ENCODE measurements at regions of chr17 and their contacts with region 1.

Region 1: DNA sequence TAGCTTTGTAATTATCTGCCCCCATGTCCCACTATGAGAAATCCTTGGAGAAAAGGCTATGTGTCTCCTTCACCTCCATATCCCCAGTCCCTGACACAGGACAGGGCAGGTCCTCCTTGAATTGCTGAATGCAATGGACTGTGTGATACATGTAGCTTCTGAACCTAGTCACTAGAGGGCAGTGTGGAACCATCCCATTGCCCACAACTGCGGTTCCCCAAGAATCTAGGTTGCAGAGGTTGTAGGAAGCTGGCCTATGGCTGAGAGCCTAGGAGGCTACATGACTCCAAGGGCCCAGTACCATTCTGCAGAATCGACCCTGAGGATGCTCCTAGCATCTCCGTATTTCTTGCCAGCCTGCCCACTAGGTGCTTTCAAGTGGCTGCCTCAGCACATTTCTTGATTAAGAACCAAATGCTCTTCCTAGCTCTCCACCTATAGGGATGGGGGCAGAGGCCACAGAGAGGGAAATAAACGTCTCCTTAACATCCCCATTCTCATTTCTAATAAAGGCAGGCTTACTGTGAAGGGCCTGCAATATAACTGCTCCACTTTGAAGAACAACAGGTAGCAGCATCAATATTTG is 394.0 kb downstream of the CA10 start:
- DNase-seq: peak; percentile 55
- ATAC-seq: peak; percentile 99
- H3K4me3 ChIP-seq: no peak overlapping the region
- H3K27ac ChIP-seq: no peak overlapping the region
- H3K4me1 ChIP-seq: no peaks in the 10 kb centered on the region
- H3K27me3 ChIP-seq: no peaks in the 10 kb centered on the region
- CTCF ChIP-seq: peak; percentile 94

Region 2: GRCh38 chr17:51793686-51794085 is 29.2 kb after region 1 on chr17:
- CTCF ChIA-PET with region 1: no interaction called
- POLR2A ChIA-PET with region 1: no interaction called
- in situ Hi-C with region 1: no loop called
- intact Hi-C with region 1: no loop called
- DNase-seq: no peak
- ATAC-seq: no peak
- H3K4me3 ChIP-seq: no peak overlapping the region
- H3K27ac ChIP-seq: no peak overlapping the region
- H3K4me1 ChIP-seq: no peaks in the 10 kb centered on the region
- H3K27me3 ChIP-seq: no peaks in the 10 kb centered on the region
- CTCF ChIP-seq: no peak

Region 3: GRCh38 chr17:51820252-51820651 is 55.8 kb after region 1 on chr17:
- CTCF ChIA-PET with region 1: no interaction called
- POLR2A ChIA-PET with region 1: no interaction called
- in situ Hi-C with region 1: no loop called
- intact Hi-C with region 1: loop called (anchors 10 kb)
- DNase-seq: no peak
- ATAC-seq: peak; percentile 70; the same call in 1 of the 2 replicates
- H3K4me3 ChIP-seq: no peak overlapping the region
- H3K27ac ChIP-seq: no peak overlapping the region
- H3K4me1 ChIP-seq: no peaks in the 10 kb centered on the region
- H3K27me3 ChIP-seq: no peaks in the 10 kb centered on the region; the same call in 1 of the 2 replicates
- CTCF ChIP-seq: no peak

Region 4: GRCh38 chr17:51860954-51861561 is 96.6 kb after region 1 on chr17:
- CTCF ChIA-PET with region 1: no interaction called
- POLR2A ChIA-PET with region 1: no interaction called
- in situ Hi-C with region 1: no loop called
- intact Hi-C with region 1: no loop called
- DNase-seq: no peak
- ATAC-seq: no peak
- H3K4me3 ChIP-seq: no peak overlapping the region
- H3K27ac ChIP-seq: no peak overlapping the region
- H3K4me1 ChIP-seq: no peaks in the 10 kb centered on the region
- H3K27me3 ChIP-seq: no peaks in the 10 kb centered on the region
- CTCF ChIP-seq: peak; percentile 74

Region 5: DNA sequence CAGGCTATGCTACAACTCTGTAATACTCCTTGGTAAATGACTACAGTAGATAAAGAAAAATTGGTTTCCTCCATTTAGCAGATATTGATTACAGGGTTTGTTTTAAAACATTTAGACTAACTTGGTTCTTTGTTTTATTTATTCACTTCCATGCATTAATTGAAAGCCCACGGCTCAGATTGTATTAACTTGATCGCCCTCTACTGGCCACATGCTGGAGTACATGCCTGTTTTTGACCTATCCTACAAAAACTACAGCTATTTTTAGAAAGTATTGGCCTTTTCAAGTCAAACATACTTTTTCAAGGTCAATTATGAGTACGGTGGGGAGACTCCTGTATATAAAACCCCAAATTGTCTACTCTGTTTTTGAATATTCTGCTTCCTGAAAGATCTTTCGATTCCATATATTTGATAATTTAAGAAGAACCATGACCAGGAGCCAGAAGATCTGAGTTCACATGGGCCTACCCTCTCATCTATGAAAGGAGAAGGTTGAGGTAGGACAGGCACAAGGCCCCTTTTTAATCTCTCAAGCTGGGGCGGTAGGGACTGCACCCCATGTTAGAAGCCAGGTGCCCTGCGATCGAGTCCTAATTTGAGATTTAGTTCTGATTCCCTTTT is 342.3 kb after region 1 on chr17:
- CTCF ChIA-PET with region 1: interaction called, 7 read pairs
- POLR2A ChIA-PET with region 1: no interaction called
- in situ Hi-C with region 1: no loop called
- intact Hi-C with region 1: loop called (anchors 2 kb)
- DNase-seq: peak; percentile 13
- ATAC-seq: no peak
- H3K4me3 ChIP-seq: no peak overlapping the region
- H3K27ac ChIP-seq: no peak overlapping the region
- H3K4me1 ChIP-seq: no peaks in the 10 kb centered on the region
- H3K27me3 ChIP-seq: no peaks in the 10 kb centered on the region
- CTCF ChIP-seq: peak; percentile 79; the same call in 1 of the 2 replicates

Region 6: DNA sequence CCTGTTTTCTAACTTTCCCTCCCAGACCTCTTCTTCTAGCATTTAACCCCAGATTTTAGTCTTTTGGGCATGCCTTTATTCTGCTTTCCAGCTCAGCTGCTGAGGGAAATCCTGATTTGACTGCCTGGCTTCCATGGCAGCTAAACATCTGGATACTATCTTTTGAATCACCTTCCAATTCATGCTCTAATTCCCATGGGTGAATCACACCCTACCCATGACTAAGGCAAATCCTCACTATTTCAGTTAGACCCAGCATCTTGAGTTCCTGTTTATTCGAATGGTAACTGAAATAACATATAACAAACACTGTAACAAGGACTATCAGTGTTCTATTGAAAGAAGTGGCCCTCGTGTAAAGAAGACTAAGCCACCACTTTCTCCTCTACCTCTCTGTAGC is 364.2 kb after region 1 on chr17:
- CTCF ChIA-PET with region 1: interaction called, 13 read pairs
- POLR2A ChIA-PET with region 1: no interaction called
- in situ Hi-C with region 1: no loop called
- intact Hi-C with region 1: no loop called
- DNase-seq: no peak
- ATAC-seq: no peak
- H3K4me3 ChIP-seq: no peak overlapping the region
- H3K27ac ChIP-seq: no peak overlapping the region
- H3K4me1 ChIP-seq: no peaks in the 10 kb centered on the region
- H3K27me3 ChIP-seq: no peaks in the 10 kb centered on the region
- CTCF ChIP-seq: no peak